Aorta (tissue), 5 donors: ENCODE measurements at regions of chr3 and their contacts with region 1.

Region 1: GRCh38 chr3:8482960-8483665 is 18.5 kb upstream of the LMCD1 start:
- DNase-seq: peak; percentile 91
- ATAC-seq: peak; percentile 86
- H3K4me3 ChIP-seq: no peak overlapping the region
- H3K27ac ChIP-seq: peak overlapping the region; percentile 88 to 100
- H3K4me1 ChIP-seq: peaks cover 3 to 20% of the 10 kb centered on the region in 2 donors
- H3K27me3 ChIP-seq: no peaks in the 10 kb centered on the region

Region 2: DNA sequence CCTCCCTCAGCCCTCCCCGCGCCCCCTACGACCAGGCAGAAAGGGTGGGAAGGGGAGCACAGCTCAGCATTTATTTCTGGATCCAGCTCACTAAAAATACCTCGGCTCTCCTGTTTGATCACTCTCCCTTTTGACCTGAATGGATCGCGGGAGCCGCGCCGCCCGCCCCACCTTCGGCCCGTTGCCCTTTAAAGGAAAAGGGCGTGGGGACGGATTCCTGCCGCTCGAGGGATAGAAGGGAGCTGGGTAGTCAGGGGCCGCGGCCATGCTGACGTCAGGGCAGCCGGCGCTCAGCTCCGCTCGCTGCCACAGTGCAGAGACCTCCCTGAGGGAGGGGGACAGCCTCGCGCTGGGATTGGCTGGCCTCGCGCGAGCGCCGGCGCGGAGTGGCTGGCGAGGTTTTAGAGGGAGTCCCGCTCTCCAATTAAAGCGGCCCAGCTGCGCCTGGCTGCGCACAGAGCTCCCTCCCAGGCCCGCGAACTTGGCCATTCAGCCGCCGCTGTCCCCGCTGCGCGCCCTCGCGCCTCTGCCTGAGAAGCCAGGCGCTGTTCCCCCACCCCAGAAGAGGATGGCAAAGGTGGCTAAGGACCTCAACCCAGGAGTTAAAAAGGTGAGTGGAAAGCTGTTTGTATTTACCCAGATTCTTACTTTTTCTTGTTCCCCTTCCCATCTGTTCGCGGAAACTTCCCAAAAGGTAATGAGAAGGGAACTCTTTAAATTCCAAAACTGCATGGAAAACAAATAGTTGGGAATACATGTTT is 18.4 kb after region 1 on chr3 and contains the start of gene LMCD1:
- intact Hi-C with region 1: loop called in 1 of 2 experiments (anchors 2 kb)
- DNase-seq: peak; percentile 98
- ATAC-seq: peak; percentile 97
- H3K4me3 ChIP-seq: peak within 1 kb of the TSS; percentile 90 to 92
- H3K27ac ChIP-seq: peak within 1 kb of the TSS; percentile 83 to 90
- H3K4me1 ChIP-seq: no peaks in the 10 kb centered on the region
- H3K27me3 ChIP-seq: no peaks in the 10 kb centered on the region
- total RNA-seq, gene LMCD1: 192 to 1,289 TPM